Endothelial cell of umbilical vein (primary cell): ENCODE measurements at regions of chr7 and their contacts with region 1.

Region 1: DNA sequence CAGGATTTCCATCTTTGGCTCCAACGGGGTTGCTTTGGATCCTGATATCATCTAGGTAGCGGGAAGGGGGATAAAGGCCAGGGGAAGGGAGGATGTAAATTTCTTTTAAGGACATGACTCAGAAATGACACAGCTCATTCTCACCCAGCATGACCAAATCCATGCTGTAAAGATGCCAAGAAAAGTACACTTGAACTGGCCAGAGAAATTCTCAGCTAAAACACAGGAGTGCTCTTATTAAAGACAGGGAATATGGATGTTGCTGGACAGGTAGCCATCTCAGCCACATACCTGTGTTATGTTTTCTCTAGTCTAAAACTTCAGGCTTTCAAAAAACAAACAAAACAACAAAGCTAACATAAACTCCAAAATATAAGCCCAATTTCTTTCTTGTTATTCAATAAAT is 68.3 kb downstream of the NAMPT start:
- DNase-seq: peak; percentile 96
- H3K4me3 ChIP-seq: peak overlapping the region in 1 of 3 experiments; percentile 46
- H3K27ac ChIP-seq: peak overlapping the region; percentile 94
- H3K4me1 ChIP-seq: peaks cover 42% of the 10 kb centered on the region
- H3K27me3 ChIP-seq: no peaks in the 10 kb centered on the region
- CTCF ChIP-seq: no peak
- POLR2A ChIP-seq: peak; percentile 22

Region 2: DNA sequence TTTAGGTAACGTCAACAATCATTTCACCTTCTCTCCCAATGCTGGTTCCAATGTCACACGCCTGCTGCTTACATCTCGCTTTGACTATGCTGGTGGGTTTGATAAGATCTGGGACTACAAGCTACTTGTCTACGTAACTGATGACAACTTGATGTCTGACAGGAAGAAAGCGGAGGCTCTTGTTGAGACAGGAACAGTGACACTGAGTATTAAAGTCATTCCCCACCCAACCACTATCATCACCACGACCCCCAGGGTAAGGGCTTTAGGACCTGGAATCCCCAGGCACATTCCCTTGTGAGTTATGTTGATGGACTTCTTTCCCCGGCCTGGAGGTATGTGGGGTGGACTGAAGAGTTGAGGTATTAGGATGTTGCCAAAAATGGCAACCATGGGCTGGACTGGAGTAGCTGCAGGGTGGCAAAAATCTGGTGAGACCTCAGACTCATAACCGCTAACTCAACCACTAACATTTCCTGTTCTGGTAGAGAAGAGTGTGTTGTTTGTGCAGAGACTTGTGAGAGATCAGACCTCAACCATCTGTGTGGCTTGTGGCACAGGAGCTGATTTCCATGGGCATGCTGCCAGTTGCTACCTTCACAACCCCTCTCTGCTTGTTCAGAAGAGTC is 194.2 kb before region 1 on chr7:
- CTCF ChIA-PET with region 1: no interaction called
- POLR2A ChIA-PET with region 1: no interaction called
- dilution Hi-C with region 1: no loop called
- intact Hi-C with region 1: no loop called
- DNase-seq: no peak
- H3K4me3 ChIP-seq: no peak overlapping the region
- H3K27ac ChIP-seq: no peak overlapping the region
- H3K4me1 ChIP-seq: no peaks in the 10 kb centered on the region
- H3K27me3 ChIP-seq: peaks cover 31 to 32% of the 10 kb centered on the region in 2 experiments
- CTCF ChIP-seq: no peak
- POLR2A ChIP-seq: no peak

Region 3: DNA sequence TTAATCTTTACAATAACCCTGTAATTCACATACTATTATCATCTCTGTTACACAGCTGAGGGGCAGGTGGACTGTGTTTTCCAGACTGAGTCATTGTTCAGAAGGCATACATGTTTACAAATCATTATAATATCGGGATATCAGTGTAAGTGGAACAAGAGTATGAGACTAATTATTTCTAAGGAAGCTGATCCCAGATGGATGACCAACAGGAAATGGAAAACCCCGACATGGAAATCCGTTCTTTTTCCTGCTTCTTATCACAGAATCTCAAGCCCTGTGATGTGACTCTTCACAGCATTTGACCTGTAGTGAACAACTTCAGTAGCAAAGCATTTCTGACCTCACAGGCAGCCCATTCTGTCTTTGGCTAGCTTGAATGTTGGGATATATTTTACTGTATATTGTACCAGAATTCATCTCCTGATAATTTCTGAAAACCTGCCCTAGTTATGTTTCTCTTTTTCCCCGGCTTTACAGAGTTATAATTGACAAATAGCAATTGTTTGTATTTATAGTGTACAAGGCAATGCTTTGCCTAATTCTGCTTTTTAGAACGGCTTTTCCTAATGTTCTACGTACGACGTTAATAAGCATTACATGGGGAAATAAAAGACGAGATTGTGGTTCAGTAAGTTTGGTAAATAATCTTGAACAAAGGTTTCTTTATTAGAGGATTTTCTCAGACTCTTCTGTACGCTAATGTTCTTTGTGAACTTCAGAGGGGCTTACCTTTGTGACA is 25.8 kb before region 1 on chr7:
- CTCF ChIA-PET with region 1: interaction called, 4 read pairs
- POLR2A ChIA-PET with region 1: interaction called, 13 read pairs
- dilution Hi-C with region 1: no loop called
- intact Hi-C with region 1: loop called (anchors 1 kb)
- DNase-seq: peak; percentile 89
- H3K4me3 ChIP-seq: no peak overlapping the region
- H3K27ac ChIP-seq: peak overlapping the region; percentile 51
- H3K4me1 ChIP-seq: peaks cover 20% of the 10 kb centered on the region
- H3K27me3 ChIP-seq: no peaks in the 10 kb centered on the region
- CTCF ChIP-seq: no peak
- POLR2A ChIP-seq: peak; percentile 67